Activated T-helper 1 cell treated with anti-CD3 and anti-CD28 coated beads, Interleukin-12 subunit alpha, Interleukin-12 subunit beta, Interleukin-2, Interleukin-4 antibody, amounts not matched to agents 30 ng/mL and 10 ng/mL and 1 ng/mL, durations not matched to agents 14 hours and 24 hours and 36 hours (primary cell): ENCODE measurements at regions of chr19 and their contacts with region 1.

Region 1: GRCh38 chr19:36772311-36773222 is at the start of gene ZNF850:
- DNase-seq: peak; percentile 88
- H3K4me3 Mint-ChIP-seq: peak within 1 kb of the TSS; percentile 98
- H3K27ac Mint-ChIP-seq: peak within 1 kb of the TSS; percentile 93
- H3K4me1 Mint-ChIP-seq: peaks cover 18% of the 10 kb centered on the region
- H3K27me3 Mint-ChIP-seq: no peaks in the 10 kb centered on the region
- total RNA-seq, gene ZNF850: 3.2 and 3.7 TPM in 2 replicates

Region 2: DNA sequence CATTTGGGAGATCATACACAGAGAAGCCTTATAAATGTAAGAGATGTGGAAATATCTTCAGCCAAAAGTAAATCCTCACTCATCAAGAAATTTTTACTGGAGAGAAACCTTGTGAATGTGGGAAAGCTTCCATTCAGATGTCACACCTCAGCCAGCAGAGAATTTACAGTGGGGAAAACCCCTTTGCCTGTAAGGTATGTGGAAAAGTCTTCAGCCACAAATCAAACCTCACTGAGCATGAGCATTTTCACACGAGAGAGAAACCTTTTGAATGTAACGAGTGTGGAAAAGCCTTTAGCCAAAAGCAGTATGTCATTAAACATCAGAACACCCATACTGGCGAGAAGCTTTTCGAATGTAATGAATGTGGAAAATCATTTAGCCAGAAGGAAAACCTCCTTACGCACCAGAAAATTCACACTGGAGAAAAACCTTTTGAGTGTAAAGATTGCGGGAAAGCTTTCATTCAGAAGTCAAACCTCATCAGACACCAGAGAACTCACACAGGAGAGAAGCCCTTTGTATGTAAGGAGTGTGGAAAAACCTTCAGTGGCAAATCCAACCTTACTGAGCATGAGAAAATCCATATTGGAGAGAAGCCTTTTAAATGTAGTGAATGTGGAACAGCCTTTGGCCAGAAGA is 536.1 kb before region 1 on chr19:
- intact Hi-C with region 1: no loop called
- DNase-seq: no peak
- H3K4me3 Mint-ChIP-seq: no peak overlapping the region
- H3K27ac Mint-ChIP-seq: no peak overlapping the region
- H3K4me1 Mint-ChIP-seq: no peaks in the 10 kb centered on the region
- H3K27me3 Mint-ChIP-seq: no peaks in the 10 kb centered on the region

Region 3: DNA sequence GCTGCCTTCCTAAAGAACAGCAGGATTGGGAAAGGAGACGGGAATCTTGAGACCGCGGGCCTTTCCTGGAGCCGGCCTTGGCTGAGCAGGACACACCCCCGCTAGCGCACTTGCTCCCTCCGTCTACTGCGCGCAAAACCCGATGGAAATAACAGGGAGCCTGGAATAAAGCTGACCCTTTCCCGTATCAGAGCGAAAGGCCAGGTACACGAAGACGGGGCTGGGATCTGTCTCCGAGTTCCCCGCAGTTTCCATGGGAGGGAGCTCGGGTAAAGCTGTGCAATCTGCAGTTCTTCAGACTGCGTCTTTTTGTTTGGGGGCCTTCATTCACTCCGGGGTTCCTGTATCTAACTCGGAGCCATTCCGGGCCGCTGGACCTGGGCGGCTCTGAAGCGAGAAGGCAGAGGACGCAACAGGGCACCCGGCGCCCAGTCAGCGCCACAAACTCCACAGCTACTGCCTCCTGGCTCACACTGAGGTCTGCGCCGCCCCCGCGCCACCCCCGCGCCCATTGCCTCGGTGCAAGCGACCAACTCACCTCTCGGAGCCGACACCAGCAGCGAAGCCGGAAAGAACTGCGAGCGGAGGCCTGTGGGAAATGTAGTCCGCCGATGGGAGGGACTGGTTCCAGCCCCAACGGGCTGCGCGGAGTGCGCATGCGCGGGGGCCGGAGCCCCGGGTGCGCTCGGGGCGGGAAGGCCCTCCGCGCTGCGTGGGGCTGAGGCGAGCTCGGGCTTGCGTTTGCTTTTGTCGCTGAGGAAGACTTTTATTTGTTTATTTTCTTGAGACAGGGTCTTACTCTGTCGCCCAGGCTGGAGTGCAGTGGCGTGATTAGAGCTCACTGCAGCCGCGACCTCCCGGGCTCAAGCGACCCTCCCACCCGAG is 393.7 kb before region 1 on chr19 and contains the start of gene ZFP14:
- intact Hi-C with region 1: loop called (anchors 2 kb)
- DNase-seq: peak; percentile 91
- H3K4me3 Mint-ChIP-seq: peak within 1 kb of the TSS; percentile 86
- H3K27ac Mint-ChIP-seq: peak within 1 kb of the TSS; percentile 73
- H3K4me1 Mint-ChIP-seq: peaks cover 13% of the 10 kb centered on the region
- H3K27me3 Mint-ChIP-seq: no peaks in the 10 kb centered on the region
- total RNA-seq, gene ZFP14: 0.83 and 1.7 TPM in 2 replicates

Region 4: GRCh38 chr19:36528194-36528920 is 244.2 kb before region 1 on chr19 and contains the start of gene ZNF260:
- intact Hi-C with region 1: loop called (anchors 1 kb)
- DNase-seq: peak; percentile 89
- H3K4me3 Mint-ChIP-seq: peak within 1 kb of the TSS; percentile 95
- H3K27ac Mint-ChIP-seq: peak within 1 kb of the TSS; percentile 93
- H3K4me1 Mint-ChIP-seq: peaks cover 22% of the 10 kb centered on the region
- H3K27me3 Mint-ChIP-seq: peaks cover 1% of the 10 kb centered on the region
- total RNA-seq, gene ZNF260: 7.5 and 8.9 TPM in 2 replicates

Region 5: GRCh38 chr19:36665832-36666231 is 106.7 kb before region 1 on chr19:
- intact Hi-C with region 1: loop called (anchors 1 kb)
- DNase-seq: no peak
- H3K4me3 Mint-ChIP-seq: peak overlapping the region; percentile 99
- H3K27ac Mint-ChIP-seq: peak overlapping the region; percentile 26
- H3K4me1 Mint-ChIP-seq: peaks cover 16% of the 10 kb centered on the region
- H3K27me3 Mint-ChIP-seq: no peaks in the 10 kb centered on the region

Region 6: GRCh38 chr19:36837906-36838783 is 65.6 kb after region 1 on chr19 and contains the start of gene ZNF790:
- intact Hi-C with region 1: loop called (anchors 1 kb)
- DNase-seq: peak; percentile 81
- H3K4me3 Mint-ChIP-seq: no peak within 1 kb of the TSS
- H3K27ac Mint-ChIP-seq: no peak within 1 kb of the TSS
- H3K4me1 Mint-ChIP-seq: no peaks in the 10 kb centered on the region
- H3K27me3 Mint-ChIP-seq: no peaks in the 10 kb centered on the region
- total RNA-seq, gene ZNF790: 4.4 and 4.5 TPM in 2 replicates

Region 7: DNA sequence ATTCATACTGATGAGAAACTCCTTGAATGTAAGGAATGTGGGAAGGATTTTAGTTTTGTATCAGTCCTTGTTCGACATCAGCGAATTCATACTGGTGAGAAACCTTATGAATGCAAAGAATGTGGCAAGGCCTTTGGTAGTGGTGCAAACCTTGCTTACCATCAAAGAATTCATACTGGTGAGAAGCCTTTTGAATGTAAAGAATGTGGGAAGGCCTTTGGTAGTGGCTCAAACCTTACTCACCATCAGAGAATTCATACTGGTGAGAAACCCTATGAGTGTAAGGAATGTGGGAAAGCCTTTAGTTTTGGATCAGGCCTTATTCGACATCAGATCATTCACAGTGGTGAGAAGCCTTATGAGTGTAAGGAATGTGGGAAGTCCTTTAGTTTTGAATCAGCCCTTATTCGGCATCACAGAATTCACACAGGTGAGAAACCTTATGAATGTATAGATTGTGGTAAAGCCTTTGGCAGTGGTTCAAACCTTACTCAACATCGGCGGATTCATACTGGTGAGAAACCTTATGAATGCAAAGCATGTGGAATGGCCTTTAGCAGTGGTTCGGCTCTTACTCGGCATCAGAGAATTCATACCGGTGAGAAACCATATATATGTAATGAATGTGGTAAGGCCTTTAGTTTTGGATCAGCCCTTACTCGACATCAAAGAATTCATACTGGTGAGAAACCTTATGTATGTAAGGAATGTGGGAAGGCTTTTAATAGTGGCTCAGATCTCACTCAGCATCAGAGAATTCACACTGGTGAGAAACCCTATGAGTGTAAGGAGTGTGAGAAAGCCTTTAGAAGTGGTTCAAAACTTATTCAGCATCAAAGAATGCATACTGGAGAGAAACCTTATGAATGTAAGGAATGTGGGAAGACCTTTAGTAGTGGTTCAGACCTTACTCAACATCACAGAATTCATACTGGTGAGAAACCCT is 104.7 kb after region 1 on chr19:
- intact Hi-C with region 1: no loop called
- DNase-seq: no peak
- H3K4me3 Mint-ChIP-seq: no peak overlapping the region
- H3K27ac Mint-ChIP-seq: no peak overlapping the region
- H3K4me1 Mint-ChIP-seq: no peaks in the 10 kb centered on the region
- H3K27me3 Mint-ChIP-seq: no peaks in the 10 kb centered on the region

Region 8: GRCh38 chr19:37217855-37218591 is 445.5 kb after region 1 on chr19 and contains the start of gene ZNF383:
- intact Hi-C with region 1: loop called (anchors 5 kb)
- DNase-seq: peak; percentile 78
- H3K4me3 Mint-ChIP-seq: peak within 1 kb of the TSS; percentile 96
- H3K27ac Mint-ChIP-seq: peak within 1 kb of the TSS; percentile 90
- H3K4me1 Mint-ChIP-seq: peaks cover 20% of the 10 kb centered on the region
- H3K27me3 Mint-ChIP-seq: no peaks in the 10 kb centered on the region
- total RNA-seq, gene ZNF383: 6.3 TPM in 2 replicates

Region 9: DNA sequence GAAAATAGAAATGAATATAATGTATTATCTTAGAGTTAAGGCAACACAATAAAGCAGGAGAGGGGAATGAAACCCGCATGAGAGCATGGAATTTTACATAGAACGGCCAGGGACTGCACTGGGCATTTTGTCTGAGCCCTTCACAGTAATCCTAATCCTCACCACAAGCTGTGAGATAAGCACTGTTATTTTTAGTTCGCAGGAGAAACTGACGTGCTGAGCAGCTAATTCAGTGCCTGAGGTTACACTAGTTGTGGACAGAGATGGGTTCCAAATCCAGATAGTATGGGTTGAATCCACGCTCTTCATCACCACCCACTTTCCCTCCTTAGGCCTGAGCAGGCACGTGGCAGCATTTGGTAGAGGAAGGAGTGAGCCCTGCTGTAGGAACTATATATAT is 573.5 kb after region 1 on chr19:
- intact Hi-C with region 1: no loop called
- DNase-seq: no peak
- H3K4me3 Mint-ChIP-seq: no peak overlapping the region
- H3K27ac Mint-ChIP-seq: no peak overlapping the region
- H3K4me1 Mint-ChIP-seq: no peaks in the 10 kb centered on the region
- H3K27me3 Mint-ChIP-seq: no peaks in the 10 kb centered on the region

Region 10: DNA sequence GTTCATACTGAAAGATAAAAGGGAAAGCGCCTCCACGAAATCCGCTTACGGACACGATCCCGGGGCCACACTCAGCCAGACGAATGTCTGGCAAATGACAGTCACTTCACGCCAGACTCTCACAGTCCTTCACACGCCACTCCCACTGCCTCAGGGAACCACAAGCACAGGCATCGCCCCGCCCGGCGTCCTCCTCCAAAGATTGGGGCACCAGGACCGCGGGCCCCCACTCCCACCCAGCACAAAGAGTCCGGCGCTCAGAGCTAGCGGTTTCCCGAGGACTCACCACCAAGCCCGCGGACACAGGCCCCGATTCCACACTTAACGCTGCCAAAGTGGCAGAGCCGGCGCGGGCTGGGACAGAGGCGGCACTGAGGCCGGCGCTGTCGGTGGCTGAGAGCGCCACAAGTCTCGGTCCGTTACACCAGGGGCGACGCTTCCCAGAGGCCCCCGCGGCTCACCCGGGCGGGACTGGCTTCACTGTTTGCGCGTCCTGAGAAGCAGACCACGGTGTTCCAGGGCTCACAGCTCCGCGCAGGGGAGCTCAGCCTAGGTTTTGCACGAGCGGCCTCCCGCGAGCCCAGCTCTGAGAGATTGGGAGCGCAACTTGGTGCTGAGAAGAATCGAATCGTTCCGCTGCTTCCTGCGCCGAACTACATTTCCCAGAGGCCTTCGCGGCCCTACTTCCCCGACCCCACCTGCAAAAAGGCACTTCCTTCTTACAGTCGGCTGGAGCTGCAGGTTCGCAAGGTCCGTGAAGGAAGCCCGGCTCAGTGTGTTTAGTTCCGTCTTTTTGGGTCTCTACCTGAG is 694.4 kb after region 1 on chr19 and contains the start of gene ZNF569:
- intact Hi-C with region 1: loop called (anchors 2 kb)
- DNase-seq: peak; percentile 85
- H3K4me3 Mint-ChIP-seq: peak within 1 kb of the TSS; percentile 92
- H3K27ac Mint-ChIP-seq: peak within 1 kb of the TSS; percentile 93
- H3K4me1 Mint-ChIP-seq: peaks cover 27% of the 10 kb centered on the region
- H3K27me3 Mint-ChIP-seq: no peaks in the 10 kb centered on the region
- total RNA-seq, gene ZNF569: 2.7 and 3.7 TPM in 2 replicates